ENCODE measurements at regions of chr17 and their contacts with region 1.

Region 1: DNA sequence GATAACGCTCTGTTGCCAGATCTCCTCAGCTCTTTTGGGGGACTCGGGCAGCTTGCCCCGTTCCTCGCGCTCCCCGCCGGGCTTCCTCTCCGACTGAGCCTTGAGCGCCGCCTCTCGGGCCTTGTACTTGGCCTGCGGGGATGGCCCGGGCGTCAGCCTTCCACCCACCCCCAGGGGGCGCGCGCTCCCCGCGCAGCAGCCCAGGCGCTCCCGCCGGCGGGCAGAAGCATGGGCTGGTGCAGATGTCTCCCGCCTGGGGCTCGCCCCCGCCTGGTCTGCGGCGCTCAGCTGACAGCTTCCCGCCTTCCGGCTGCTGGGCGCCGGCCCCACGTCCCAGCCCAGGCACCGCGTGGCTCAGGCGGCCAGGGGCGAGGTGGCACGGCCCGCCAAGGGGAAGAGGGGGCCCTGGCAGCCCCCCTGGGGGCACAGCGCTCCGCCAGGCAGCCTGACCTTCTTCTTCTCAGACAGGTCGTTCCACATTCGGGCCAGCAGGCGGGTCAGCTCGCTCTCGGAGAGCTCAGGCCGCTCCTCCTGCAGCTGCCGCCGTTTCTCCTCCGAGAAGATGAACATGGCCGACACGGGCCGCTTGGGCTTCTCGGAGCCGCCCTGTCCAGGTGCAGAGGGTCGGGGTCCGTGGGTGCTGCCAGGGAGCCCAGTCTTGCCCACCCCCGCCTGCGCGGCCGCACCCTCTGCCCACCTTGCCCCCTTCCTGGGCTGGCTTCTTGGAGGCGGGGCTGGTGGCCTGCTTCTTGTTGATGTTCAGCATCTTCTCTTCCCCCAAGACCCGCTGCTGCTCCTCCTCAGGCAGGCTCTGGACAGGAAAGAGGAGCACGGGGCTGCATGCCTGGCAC is 8.9 kb downstream of the UBTF start:
- DNase-seq: peak; percentile 94
- ATAC-seq: peak; percentile 99
- H3K4me3 Mint-ChIP-seq: peak overlapping the region; percentile 69
- H3K27ac Mint-ChIP-seq: peak overlapping the region; percentile 76
- H3K4me1 Mint-ChIP-seq: peaks cover 41% of the 10 kb centered on the region
- H3K27me3 Mint-ChIP-seq: no peaks in the 10 kb centered on the region

Region 2: GRCh38 chr17:44070455-44071197 is 139.9 kb before region 1 on chr17 and contains the start of gene G6PC3:
- CTCF ChIA-PET with region 1: no interaction called
- DNase-seq: peak; percentile 94
- ATAC-seq: peak; percentile 76
- H3K4me3 Mint-ChIP-seq: peak within 1 kb of the TSS; percentile 89
- H3K27ac Mint-ChIP-seq: peak within 1 kb of the TSS; percentile 94
- H3K4me1 Mint-ChIP-seq: peaks cover 35% of the 10 kb centered on the region
- H3K27me3 Mint-ChIP-seq: no peaks in the 10 kb centered on the region
- total RNA-seq, gene G6PC3: 21.7 to 25.6 TPM

Region 3: DNA sequence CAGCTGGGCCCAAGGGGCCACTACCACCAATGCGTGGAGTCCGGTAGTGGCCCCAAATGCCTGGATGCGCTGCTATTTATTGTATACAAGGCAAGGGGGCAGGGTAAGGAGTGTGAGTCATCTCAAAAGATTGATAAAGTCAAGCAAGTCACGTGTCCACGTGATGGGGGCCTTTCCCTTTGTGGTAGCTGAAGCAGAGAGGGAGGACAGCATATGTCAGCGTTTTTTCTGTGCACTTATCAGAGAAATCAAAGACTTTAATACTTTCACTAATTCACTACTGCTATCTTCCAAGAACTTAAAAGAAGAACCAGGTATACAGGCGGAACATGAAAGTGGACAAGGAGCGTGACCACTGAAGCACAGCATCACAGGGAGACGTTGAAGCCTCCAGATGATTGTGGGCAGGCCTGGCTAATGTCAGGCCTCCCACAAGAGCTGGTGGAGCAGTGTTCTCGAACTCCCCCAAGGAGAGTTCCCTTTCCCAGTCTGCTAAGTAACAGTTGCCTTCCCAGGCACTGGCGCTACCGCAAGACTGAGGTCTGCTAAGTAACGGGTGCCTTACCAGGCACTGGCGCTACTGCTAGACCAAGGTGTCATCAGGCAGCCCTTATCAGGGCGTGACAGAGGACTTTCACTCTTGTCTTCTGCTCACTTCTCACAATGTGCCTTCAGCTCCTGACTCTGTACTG is 50.9 kb before region 1 on chr17:
- CTCF ChIA-PET with region 1: no interaction called
- DNase-seq: peak; percentile 52
- ATAC-seq: peak; percentile 30
- H3K4me3 Mint-ChIP-seq: no peak overlapping the region
- H3K27ac Mint-ChIP-seq: no peak overlapping the region
- H3K4me1 Mint-ChIP-seq: peaks cover 7% of the 10 kb centered on the region
- H3K27me3 Mint-ChIP-seq: no peaks in the 10 kb centered on the region

Region 4: DNA sequence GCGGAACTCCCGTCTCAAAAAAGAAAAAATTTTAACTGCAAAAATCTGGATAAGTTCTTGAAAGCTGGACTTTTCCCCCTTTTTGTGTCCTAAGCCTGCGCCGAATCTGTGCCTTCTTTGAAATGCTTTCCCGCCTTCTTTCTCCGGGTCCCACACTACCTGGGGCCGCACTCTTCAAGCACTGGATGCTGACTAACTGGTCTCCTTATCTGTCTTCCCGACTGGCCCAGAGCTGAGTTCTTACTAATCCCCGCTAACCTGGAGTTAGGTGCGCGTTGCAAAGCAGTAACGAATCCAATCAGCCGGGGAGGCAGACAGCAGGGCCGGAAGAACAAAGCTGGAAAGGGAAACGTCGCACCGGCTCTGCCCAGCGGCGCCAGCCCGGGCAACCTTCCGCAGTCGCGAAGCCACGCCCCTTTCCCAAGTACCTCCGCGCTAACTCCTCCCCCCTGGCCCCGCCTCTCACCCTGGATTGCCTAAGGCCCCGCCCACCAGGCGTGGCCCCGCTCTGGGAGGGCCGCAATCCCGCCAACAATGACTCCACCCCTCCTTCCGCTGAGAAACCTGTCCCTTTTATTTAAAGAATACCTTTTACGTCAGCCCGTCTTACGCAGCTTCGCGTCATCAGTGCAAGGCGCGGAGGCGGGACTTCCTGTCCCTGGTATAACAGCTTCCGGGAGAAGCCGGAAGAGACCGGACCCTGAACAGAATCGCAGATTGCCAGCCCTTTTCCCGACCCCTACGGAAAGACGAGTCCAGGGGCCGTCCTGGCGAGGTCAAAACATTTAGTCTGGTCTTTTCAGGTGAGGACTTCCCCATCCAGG is 24.0 kb before region 1 on chr17 and contains the start of gene TMUB2:
- CTCF ChIA-PET with region 1: interaction called, 21 read pairs
- DNase-seq: peak; percentile 99
- ATAC-seq: peak; percentile 91
- H3K4me3 Mint-ChIP-seq: peak within 1 kb of the TSS; percentile 98
- H3K27ac Mint-ChIP-seq: peak within 1 kb of the TSS; percentile 98
- H3K4me1 Mint-ChIP-seq: peaks cover 42% of the 10 kb centered on the region
- H3K27me3 Mint-ChIP-seq: no peaks in the 10 kb centered on the region
- total RNA-seq, gene TMUB2: 31.4 to 34.1 TPM

Region 5: GRCh38 chr17:44280392-44280937 is 69.9 kb after region 1 on chr17:
- CTCF ChIA-PET with region 1: no interaction called
- DNase-seq: no peak
- ATAC-seq: no peak
- H3K4me3 Mint-ChIP-seq: no peak overlapping the region
- H3K27ac Mint-ChIP-seq: no peak overlapping the region
- H3K4me1 Mint-ChIP-seq: peaks cover 17% of the 10 kb centered on the region
- H3K27me3 Mint-ChIP-seq: peaks cover 3% of the 10 kb centered on the region

Region 6: DNA sequence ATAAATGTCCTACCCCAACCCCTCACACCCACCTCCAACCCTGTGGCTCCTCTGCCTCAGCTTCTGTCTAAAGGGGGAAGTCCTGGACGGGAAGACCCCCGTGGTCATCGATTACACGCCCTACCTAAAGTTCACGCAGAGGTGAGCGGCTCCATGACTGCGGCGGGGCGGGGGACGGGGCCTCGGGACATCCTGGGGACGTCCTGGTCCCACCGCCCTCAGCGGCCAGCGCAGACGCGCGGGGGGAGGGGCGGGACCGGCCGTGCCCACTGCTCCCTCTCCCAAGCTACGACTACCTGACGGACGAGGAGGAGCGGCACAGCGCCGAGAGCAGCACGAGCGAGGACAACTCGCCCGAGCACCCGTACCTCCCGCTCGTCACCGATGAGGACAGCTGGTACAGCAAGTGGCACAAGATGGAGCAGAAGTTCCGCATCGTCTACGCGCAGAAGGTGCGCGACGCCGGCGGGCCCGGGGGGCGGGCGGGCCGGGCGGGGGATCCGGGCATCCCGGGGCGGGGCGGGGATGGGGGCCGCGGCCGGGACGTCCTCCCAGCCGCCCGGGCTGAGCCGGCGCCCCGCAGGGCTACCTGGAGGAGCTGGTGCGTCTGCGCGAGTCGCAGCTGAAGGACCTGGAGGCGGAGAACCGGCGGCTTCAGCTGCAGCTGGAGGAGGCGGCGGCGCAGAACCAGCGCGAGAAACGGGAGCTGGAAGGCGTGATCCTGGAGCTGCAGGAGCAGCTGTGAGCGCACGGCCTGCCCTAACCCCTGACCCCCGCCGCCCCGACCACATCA is 104.5 kb after region 1 on chr17:
- CTCF ChIA-PET with region 1: interaction called, 47 read pairs
- DNase-seq: peak; percentile 56
- ATAC-seq: peak; percentile 69
- H3K4me3 Mint-ChIP-seq: peak overlapping the region; percentile 59
- H3K27ac Mint-ChIP-seq: no peak overlapping the region
- H3K4me1 Mint-ChIP-seq: peaks cover 9% of the 10 kb centered on the region
- H3K27me3 Mint-ChIP-seq: peaks cover 31% of the 10 kb centered on the region

Region 7: DNA sequence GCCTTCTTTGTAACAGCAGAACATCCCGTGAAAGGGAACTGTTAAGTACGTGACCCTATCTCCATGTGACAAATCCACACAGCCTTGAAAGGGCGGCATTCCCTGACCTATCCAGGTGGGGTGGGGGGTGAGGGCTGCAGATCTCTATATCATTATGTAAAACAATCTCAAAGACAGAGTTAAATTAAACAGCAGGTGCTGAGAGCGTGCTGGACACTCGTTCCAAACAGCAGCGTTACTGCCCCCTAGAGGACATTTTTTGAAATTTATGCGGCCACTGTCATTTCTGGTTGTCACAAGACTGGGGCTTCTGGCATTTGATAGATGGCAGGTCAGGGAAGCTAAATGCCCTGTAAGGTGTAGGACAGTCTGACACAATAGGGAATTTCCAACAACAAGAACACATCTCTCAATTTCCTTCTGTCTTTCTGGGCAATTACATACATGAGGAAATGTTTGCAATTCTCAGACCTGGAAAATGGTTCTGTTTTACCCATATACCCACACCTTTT is 120.7 kb after region 1 on chr17:
- CTCF ChIA-PET with region 1: interaction called, 94 read pairs
- DNase-seq: peak; percentile 86
- ATAC-seq: peak; percentile 46
- H3K4me3 Mint-ChIP-seq: no peak overlapping the region
- H3K27ac Mint-ChIP-seq: no peak overlapping the region
- H3K4me1 Mint-ChIP-seq: peaks cover 13% of the 10 kb centered on the region
- H3K27me3 Mint-ChIP-seq: no peaks in the 10 kb centered on the region

Region 8: DNA sequence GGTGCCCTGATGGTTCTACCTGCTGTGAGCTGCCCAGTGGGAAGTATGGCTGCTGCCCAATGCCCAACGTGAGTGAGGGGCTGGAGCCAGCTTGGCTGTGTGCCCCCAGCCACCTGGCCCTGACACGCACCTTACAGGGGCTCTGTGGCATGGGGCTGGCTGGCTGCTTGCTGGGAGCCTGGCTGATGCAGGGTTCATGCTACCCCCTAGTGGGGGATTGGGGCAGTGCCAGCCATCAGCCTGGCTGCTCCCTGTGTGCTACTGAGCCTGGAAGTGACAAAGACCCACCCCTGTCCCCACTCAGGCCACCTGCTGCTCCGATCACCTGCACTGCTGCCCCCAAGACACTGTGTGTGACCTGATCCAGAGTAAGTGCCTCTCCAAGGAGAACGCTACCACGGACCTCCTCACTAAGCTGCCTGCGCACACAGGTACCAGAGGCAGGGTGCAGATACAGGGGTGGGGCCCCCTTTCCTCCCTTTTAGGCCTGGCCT is 140.2 kb after region 1 on chr17:
- CTCF ChIA-PET with region 1: interaction called, 64 read pairs
- DNase-seq: peak; percentile 81
- ATAC-seq: peak; percentile 79
- H3K4me3 Mint-ChIP-seq: no peak overlapping the region
- H3K27ac Mint-ChIP-seq: no peak overlapping the region
- H3K4me1 Mint-ChIP-seq: peaks cover 25% of the 10 kb centered on the region
- H3K27me3 Mint-ChIP-seq: peaks cover 12% of the 10 kb centered on the region

Measured in activated CD8-positive, alpha-beta memory T cell treated with anti-CD3 and anti-CD28 coated beads, Interleukin-2, amount 10 ng/mL, durations not matched to agents 7 days and 5 days (primary cell).